ENCODE measurements at regions of chr9 and their contacts with region 1.

Region 1: GRCh38 chr9:4837261-4838188 is 44.8 kb downstream of the RCL1 start:
- DNase-seq: no peak

Region 2: GRCh38 chr9:4803670-4804530 is 33.6 kb before region 1 on chr9:
- intact Hi-C with region 1: loop called in 1 of 2 experiments (anchors 5 kb)
- DNase-seq: no peak

Region 3: DNA sequence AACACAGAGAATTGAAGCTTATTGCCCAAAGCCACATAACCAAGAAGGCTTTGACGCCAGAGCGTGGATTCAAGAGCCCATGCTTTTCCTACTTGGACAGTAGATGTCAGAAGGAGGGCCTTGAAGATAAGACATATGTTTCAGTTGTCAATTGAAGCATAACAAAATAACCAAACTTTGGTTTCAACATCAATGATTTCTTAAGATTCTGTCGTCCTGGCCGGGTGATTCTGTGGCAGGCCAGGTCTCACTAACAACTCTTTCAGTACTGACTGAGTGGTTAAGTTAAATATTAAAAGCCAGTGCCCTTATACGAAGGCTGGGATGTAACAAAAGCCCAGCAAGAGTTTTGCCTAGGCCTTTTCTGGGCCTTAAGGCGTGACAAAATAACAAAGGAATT is 49.2 kb after region 1 on chr9:
- intact Hi-C with region 1: no loop called
- DNase-seq: no peak

Measured in posterior vena cava (tissue), 2 donors.